Body of pancreas (tissue), 4 donors: ENCODE measurements at regions of chr3 and their contacts with region 1.

Region 1: DNA sequence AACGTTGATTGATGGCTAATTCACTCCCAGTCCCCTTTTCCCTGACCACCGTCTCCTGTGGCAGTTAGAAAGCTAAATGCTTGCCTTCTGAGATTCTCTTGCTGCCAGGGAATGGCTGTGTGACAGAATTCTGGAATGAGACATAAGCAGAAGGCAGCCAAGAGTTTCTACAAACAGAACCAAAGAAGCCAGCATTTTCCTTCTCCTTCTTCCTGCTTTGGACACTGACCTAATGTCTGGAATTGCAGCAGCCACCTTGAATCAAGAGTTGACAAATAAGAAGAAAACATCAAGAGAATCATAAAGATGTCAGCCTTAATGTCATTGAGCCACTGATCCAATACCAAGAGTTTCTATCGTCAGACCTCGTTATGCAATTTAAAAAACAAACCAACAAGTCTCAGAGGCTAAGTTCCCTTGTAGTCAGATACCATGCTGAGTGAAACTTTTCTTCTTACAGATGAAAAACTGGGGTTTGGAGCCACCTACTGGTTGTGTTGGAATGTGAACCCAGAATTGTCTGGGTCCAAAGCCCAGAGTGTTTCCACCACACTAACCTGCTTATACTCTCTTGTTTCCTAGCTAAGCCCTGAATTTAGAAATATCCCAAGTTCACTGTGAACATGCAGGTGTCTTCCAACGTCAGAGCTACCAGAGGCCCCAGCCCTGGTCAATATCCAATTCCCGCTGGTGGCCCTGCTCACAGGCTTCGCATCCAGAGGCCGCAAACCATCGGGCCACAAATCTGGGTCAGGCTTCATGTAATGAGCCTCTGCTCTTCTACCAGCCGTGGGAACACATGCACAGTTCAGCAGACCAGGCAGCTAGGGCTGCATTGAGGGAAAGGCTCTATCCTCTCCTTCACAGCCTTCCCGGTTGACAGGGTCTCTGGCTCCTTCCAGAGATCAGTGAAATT is 42.5 kb downstream of the MCF2L2 start:
- DNase-seq: peak; percentile 69 to 75 (median 72)
- ATAC-seq: peak; percentile 92
- H3K4me3 ChIP-seq: no peak overlapping the region
- H3K27ac ChIP-seq: peak overlapping the region in 1 of 4 donors; percentile 29
- H3K4me1 ChIP-seq: peaks cover 7% of the 10 kb centered on the region
- H3K27me3 ChIP-seq: no peaks in the 10 kb centered on the region
- CTCF ChIP-seq: peak; percentile 52 to 89 (median 75)
- POLR2A ChIP-seq: no peak

Region 2: GRCh38 chr3:182954553-182955235 is 431.3 kb before region 1 on chr3:
- intact Hi-C with region 1: no loop called
- DNase-seq: no peak
- ATAC-seq: no peak
- H3K4me3 ChIP-seq: no peak overlapping the region
- H3K27ac ChIP-seq: no peak overlapping the region
- H3K4me1 ChIP-seq: no peaks in the 10 kb centered on the region
- H3K27me3 ChIP-seq: no peaks in the 10 kb centered on the region
- CTCF ChIP-seq: no peak
- POLR2A ChIP-seq: no peak

Region 3: DNA sequence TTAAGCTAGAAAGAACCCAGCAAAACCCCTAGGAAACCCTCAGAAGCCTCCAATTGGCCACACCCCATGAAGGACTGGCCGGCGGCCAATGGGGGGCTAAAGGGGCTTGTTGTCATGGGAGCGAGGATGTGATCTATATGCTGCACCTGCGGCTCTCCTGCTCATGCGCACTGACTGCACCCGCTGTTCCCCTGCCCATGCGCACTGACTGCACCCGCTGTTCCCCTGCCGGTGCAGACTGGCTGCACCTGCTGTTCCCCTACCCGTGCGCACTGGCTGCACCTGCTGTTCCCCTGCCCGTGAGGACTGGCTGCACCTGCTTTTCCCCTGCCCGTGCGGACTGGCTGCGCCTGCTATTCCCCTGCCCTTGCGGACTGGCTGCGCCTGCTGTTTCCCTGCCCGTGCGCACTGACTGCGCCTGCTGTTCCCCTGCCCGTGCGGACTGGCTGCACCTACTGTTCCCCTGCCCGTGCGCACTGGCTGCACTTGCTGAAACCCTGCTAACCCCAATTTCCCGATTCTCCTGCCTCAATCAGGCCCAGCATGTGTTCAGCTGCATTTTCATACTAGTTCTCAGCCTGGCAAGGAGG is 269.8 kb before region 1 on chr3:
- intact Hi-C with region 1: loop called (anchors 10 kb)
- DNase-seq: peak; percentile 69 to 87 (median 84)
- ATAC-seq: peak; percentile 84
- H3K4me3 ChIP-seq: no peak overlapping the region
- H3K27ac ChIP-seq: peak overlapping the region in 3 of 4 donors; percentile 50 to 73 (median 67)
- H3K4me1 ChIP-seq: peaks cover 9% of the 10 kb centered on the region
- H3K27me3 ChIP-seq: no peaks in the 10 kb centered on the region
- CTCF ChIP-seq: no peak
- POLR2A ChIP-seq: no peak

Region 4: GRCh38 chr3:183180105-183180783 is 205.7 kb before region 1 on chr3:
- intact Hi-C with region 1: loop called (anchors 5 kb)
- DNase-seq: no peak
- ATAC-seq: no peak
- H3K4me3 ChIP-seq: no peak overlapping the region
- H3K27ac ChIP-seq: no peak overlapping the region
- H3K4me1 ChIP-seq: peaks cover 15% of the 10 kb centered on the region
- H3K27me3 ChIP-seq: peaks cover 0 to 8% of the 10 kb centered on the region in 2 donors
- CTCF ChIP-seq: no peak
- POLR2A ChIP-seq: no peak